Lower lobe of right lung (tissue), 2 donors: ENCODE measurements at regions of chr4 and their contacts with region 1.

Region 1: GRCh38 chr4:158821228-158821971 is 52.6 kb downstream of the FNIP2 start:
- DNase-seq: no peak
- ATAC-seq: peak in 1 of 2 donors; percentile 23
- H3K4me3 ChIP-seq: no peak overlapping the region
- H3K27ac ChIP-seq: peak overlapping the region; percentile 20
- H3K4me1 ChIP-seq: peaks cover 96% of the 10 kb centered on the region
- H3K27me3 ChIP-seq: no peaks in the 10 kb centered on the region
- CTCF ChIP-seq: no peak

Region 2: DNA sequence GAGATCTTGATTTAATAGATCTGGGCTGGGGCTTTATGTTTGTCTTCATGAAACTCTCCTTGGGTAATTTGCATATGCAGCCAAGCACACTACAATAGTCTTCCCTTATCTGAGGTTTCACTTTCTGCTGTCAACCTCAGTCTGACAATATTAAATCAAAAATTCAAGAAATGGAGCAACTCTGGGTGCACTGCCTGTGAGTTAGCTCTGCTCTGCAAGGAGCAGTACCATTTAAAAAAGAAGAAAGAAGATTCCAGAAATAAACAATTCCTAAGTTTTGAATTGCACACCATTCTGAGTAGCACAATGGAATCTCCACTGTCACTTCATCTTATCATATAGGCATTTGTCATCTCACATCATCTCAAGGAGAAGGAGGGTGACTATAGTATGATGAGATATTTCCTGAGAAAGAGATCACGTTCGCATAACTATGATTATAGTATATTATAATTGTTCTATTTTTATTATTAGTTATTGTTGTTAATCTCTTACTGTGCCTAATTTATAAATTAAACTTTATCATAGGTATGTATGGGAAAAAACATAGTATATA is 43.2 kb before region 1 on chr4:
- intact Hi-C with region 1: loop called (anchors 10 kb)
- DNase-seq: no peak
- ATAC-seq: peak; percentile 15 to 22
- H3K4me3 ChIP-seq: no peak overlapping the region
- H3K27ac ChIP-seq: no peak overlapping the region
- H3K4me1 ChIP-seq: peaks cover 61% of the 10 kb centered on the region
- H3K27me3 ChIP-seq: no peaks in the 10 kb centered on the region
- CTCF ChIP-seq: no peak